Psoas muscle (tissue), 8 donors: ENCODE measurements at regions of chr6 and their contacts with region 1.

Region 1: GRCh38 chr6:42532038-42532669 is 31.7 kb upstream of the UBR2 start:
- DNase-seq: no peak
- ATAC-seq: peak in 1 of 4 donors; percentile 55
- H3K4me3 ChIP-seq: no peak overlapping the region
- H3K27ac ChIP-seq: no peak overlapping the region
- H3K4me1 ChIP-seq: no peaks in the 10 kb centered on the region
- H3K27me3 ChIP-seq: no peaks in the 10 kb centered on the region
- CTCF ChIP-seq: peak; percentile 78

Region 2: GRCh38 chr6:42453031-42453653 is 79.0 kb before region 1 on chr6:
- intact Hi-C with region 1: loop called in 1 of 2 experiments (anchors 5 kb)
- DNase-seq: peak; percentile 85 to 91
- ATAC-seq: peak; percentile 85 to 95 (median 92)
- H3K4me3 ChIP-seq: peak overlapping the region; percentile 76
- H3K27ac ChIP-seq: peak overlapping the region; percentile 65
- H3K4me1 ChIP-seq: no peaks in the 10 kb centered on the region
- H3K27me3 ChIP-seq: no peaks in the 10 kb centered on the region
- CTCF ChIP-seq: no peak